Mammary epithelial cell (primary cell): ENCODE measurements at regions of chr1 and their contacts with region 1.

Region 1: DNA sequence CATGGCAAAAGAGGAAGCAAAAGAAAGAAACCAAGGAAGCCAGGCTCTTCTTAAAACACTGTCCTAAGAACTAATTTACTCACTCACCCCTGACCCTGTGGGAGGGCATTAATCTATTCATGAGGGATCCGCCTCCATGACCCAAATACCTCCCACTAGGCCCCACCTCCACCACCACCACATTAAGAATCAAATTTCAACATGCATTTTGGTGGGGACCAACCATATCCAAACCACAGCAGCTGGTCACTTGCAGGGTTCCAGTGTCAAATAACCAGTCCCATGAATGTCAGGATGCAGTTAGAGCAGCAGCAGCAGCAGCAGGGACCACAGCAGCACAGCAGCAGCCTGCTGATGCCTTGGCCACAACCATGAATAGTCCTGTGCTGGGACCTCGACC is 83.8 kb downstream of the ZC3H11B start:
- DNase-seq: no peak
- H3K4me3 ChIP-seq: no peak overlapping the region
- H3K27ac ChIP-seq: no peak overlapping the region
- H3K4me1 ChIP-seq: no peaks in the 10 kb centered on the region
- H3K27me3 ChIP-seq: peaks cover 5% of the 10 kb centered on the region
- CTCF ChIP-seq: no peak

Region 2: DNA sequence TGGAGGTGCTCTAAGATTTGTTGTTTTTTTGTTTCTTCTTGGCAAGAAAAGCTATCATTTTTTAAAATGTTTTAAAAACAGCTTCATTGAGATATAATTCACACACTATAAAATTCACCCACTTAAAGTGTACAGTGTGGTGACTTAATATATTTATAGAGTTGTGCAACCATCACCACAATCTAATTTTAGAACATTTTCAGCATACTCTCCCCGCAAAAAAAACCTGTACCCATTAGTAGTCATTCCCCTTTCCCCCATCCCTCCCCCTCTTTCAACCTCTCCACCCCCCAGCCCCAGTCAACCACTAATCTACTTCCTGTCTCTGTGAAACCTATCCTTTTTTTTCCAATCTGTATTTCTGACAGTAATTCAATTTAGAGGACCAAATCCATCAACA is 53.2 kb after region 1 on chr1:
- CTCF ChIA-PET with region 1: no interaction called
- dilution Hi-C with region 1: loop called (anchors 10 kb)
- in situ Hi-C with region 1: no loop called
- intact Hi-C with region 1: no loop called
- DNase-seq: no peak
- H3K4me3 ChIP-seq: no peak overlapping the region
- H3K27ac ChIP-seq: no peak overlapping the region
- H3K4me1 ChIP-seq: peaks cover 9% of the 10 kb centered on the region
- H3K27me3 ChIP-seq: no peaks in the 10 kb centered on the region
- CTCF ChIP-seq: no peak

Region 3: DNA sequence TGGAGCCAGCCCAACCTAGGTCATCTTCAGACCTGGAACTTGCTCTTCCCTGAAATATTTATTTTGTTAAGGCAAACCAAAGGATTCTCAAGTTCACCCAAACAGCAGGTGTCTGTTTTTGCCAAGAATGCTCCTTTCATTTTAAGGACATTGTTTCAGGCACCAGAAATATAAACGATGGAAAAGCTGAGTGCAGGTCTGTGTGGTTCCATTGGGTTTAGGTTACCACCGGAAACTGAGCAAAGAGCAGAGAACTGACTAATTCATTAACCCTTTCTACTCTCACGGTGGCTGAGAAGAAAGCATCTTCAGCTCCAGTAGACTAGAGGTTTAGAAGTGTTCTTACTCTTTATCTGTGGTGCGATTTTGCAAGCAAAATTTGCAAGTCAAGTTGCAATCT is 121.8 kb after region 1 on chr1:
- CTCF ChIA-PET with region 1: no interaction called
- dilution Hi-C with region 1: no loop called
- in situ Hi-C with region 1: no loop called
- intact Hi-C with region 1: no loop called
- DNase-seq: no peak
- H3K4me3 ChIP-seq: no peak overlapping the region
- H3K27ac ChIP-seq: no peak overlapping the region
- H3K4me1 ChIP-seq: no peaks in the 10 kb centered on the region
- H3K27me3 ChIP-seq: peaks cover 2% of the 10 kb centered on the region
- CTCF ChIP-seq: no peak